Heart right ventricle (tissue), 16 donors: ENCODE measurements at regions of chr2 and their contacts with region 1.

Region 1: GRCh38 chr2:219965287-219966194 is 338.1 kb downstream of the SLC4A3 start:
- DNase-seq: no peak
- ATAC-seq: no peak
- H3K4me3 ChIP-seq: no peak overlapping the region
- H3K27ac ChIP-seq: no peak overlapping the region
- H3K4me1 ChIP-seq: no peaks in the 10 kb centered on the region
- H3K27me3 ChIP-seq: peaks cover 0 to 5% (median 0%) of the 10 kb centered on the region in 7 donors
- CTCF ChIP-seq: no peak

Region 2: DNA sequence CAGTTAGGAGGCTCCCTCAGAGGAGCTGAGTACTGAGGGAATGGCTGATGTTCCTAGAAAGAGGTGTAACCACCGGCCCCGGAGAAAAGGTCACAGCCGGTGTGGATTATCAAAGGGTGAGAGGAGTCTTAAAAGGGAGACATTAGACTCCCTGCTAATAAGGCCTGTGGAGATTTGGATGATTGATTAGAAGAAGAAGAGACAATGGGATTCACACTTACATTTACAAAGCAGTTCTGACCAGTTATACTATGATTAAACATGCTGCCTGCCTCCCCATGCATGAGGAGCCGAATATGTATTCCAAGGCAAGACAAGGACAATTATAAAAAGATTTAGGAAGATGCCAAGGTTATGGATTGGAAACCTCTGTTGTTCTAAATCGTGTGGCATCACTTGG is 35.7 kb before region 1 on chr2:
- intact Hi-C with region 1: loop called in 1 of 10 experiments (anchors 2 kb)
- DNase-seq: no peak
- ATAC-seq: no peak
- H3K4me3 ChIP-seq: no peak overlapping the region
- H3K27ac ChIP-seq: no peak overlapping the region
- H3K4me1 ChIP-seq: no peaks in the 10 kb centered on the region
- H3K27me3 ChIP-seq: no peaks in the 10 kb centered on the region
- CTCF ChIP-seq: no peak

Region 3: GRCh38 chr2:220053919-220054318 is 88.4 kb after region 1 on chr2:
- intact Hi-C with region 1: no loop called
- DNase-seq: no peak
- ATAC-seq: no peak
- H3K4me3 ChIP-seq: no peak overlapping the region
- H3K27ac ChIP-seq: no peak overlapping the region
- H3K4me1 ChIP-seq: no peaks in the 10 kb centered on the region
- H3K27me3 ChIP-seq: no peaks in the 10 kb centered on the region
- CTCF ChIP-seq: no peak